Left ventricle myocardium superior (tissue), 1 donor: ENCODE measurements at regions of chr2 and their contacts with region 1.

Region 1: DNA sequence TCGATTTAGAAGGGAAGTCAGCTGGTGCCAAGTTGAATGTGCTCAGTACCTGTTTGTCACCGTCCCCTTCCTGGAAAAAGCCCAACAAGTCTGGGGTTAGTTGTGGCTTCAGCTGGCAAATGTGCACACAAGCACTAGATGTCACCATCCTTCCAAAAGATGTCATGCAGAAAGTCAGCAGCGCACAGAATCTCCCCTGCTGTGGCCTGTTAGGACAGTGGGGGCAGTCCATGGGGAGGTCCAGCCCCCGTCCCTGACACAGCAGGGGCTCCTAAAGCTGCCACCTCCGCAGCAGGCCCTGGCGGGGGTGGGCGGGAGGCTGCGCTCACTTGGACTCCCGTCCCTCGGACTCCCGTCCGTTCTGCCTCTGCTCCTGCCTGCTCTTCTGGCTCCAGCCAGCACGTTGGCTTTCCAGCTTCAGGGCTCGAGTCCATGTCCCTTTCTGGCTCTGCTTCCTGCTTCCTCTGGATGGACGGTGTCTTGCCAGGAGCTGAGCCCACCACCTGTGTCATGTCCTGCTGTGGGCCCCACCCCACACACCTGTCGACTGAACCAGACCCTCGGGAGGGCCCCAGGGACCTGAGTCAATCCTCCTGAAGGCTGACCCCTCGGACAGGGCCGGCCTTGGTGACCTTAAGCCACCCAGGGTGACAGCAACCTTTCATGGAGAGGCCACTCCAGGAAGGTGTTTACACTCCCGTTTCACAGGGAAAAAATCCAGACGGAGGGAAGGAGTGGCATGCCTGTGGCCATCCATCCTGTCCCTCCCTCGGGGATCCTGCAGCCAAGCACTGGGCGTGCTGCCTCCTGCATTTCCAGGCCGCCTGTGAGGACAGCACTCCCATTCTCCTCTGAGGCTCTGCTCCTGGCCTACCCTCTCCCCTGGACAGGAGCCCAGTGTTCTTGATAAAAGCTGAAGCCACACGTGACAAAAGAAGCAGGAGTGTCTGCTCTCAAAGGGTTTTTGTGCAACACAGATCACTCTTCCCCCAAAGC is 8.5 kb downstream of the RAB17 start:
- DNase-seq: peak; percentile 89
- ATAC-seq: peak; percentile 94

Region 2: GRCh38 chr2:237744613-237745249 is 162.7 kb after region 1 on chr2:
- intact Hi-C with region 1: loop called (anchors 5 kb)
- DNase-seq: peak; percentile 86
- ATAC-seq: peak; percentile 80

Region 3: DNA sequence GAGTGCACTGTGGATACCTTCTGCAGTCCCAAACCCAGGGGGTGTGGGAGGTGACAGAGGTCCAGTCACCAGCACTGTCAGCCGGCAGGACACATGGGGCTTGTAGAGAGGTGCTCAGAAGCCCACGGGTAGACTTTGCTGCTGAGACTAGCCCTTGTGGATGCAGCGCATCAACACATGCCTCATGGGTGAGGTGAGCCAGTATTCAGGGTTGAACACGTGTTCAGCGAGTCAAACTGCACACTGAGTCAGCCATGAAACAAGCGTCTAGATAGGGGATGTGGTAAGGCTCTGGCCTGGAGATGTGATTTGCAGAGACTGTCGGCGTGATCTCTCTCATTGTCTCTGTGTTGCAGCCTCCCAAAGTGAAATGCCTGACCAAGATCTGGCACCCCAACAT is 442.9 kb after region 1 on chr2:
- intact Hi-C with region 1: no loop called
- DNase-seq: no peak
- ATAC-seq: no peak